Activated T-helper 2 cell treated with anti-CD3 and anti-CD28 coated beads, Interferon-gamma antibody, Interleukin-2, Interleukin-4, amounts not matched to agents 10 μg/mL and 5 μg/mL and 100 μg/mL, durations not matched to agents 14 hours and 24 hours and 36 hours (primary cell): ENCODE measurements at regions of chr14 and their contacts with region 1.

Region 1: GRCh38 chr14:77301103-77301502 is 19.6 kb downstream of the POMT2 start:
- DNase-seq: peak; percentile 43
- H3K4me3 Mint-ChIP-seq: no peak overlapping the region
- H3K27ac Mint-ChIP-seq: no peak overlapping the region
- H3K4me1 Mint-ChIP-seq: peaks cover 25% of the 10 kb centered on the region
- H3K27me3 Mint-ChIP-seq: peaks cover 1% of the 10 kb centered on the region

Region 2: GRCh38 chr14:76962303-76962660 is 338.8 kb before region 1 on chr14:
- intact Hi-C with region 1: loop called (anchors 5 kb)
- DNase-seq: no peak
- H3K4me3 Mint-ChIP-seq: peak overlapping the region; percentile 50
- H3K27ac Mint-ChIP-seq: peak overlapping the region; percentile 95
- H3K4me1 Mint-ChIP-seq: peaks cover 80% of the 10 kb centered on the region
- H3K27me3 Mint-ChIP-seq: no peaks in the 10 kb centered on the region

Region 3: DNA sequence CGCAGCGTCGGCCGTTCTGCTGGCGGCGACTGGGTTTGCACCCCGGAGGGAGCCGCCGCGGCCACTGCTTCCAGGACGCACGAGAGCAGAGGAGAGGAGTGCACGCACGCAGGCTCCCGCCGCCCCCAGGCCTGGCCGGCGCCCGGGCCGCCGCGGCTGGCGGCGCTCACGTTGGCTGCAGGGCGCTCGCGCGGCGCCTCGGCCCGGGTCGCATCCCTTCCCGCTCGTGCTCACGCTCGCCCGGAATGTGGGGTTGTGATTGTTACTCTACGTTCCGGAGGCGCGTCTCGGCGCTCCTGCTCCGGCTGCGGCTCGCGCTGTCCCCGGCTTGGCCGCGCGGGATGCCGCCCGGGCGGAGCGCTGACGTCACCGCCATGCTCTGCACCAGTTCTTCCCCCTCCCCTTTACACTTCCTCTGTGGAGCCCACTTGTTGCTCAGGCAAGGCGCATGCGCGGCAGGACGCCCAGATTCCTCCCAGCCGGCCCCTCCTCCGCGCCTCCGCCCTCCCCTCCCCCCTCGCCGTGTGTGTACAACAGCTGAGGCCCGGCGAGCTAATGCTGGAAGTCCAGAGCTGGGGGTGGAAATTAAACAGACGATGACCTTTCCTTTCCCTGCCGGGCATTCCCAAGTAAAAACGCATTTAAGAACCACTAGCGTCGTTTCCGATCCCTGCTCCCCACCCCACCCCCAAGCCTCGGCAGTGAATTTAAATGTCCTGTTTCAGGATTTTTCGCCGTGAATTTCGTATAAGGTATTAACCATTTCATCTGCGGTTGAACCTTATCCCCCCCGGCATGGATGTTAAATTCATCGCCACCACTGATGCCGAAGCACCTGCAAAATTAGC is 272.5 kb before region 1 on chr14 and contains the start of gene IRF2BPL:
- intact Hi-C with region 1: loop called (anchors 5 kb)
- DNase-seq: peak; percentile 94
- H3K4me3 Mint-ChIP-seq: peak within 1 kb of the TSS; percentile 89
- H3K27ac Mint-ChIP-seq: peak within 1 kb of the TSS; percentile 94
- H3K4me1 Mint-ChIP-seq: peaks cover 49% of the 10 kb centered on the region
- H3K27me3 Mint-ChIP-seq: no peaks in the 10 kb centered on the region
- total RNA-seq, gene IRF2BPL: 34.8 and 35.8 TPM in 2 replicates

Region 4: GRCh38 chr14:77040059-77040740 is 260.9 kb before region 1 on chr14:
- intact Hi-C with region 1: loop called (anchors 5 kb)
- DNase-seq: peak; percentile 87
- H3K4me3 Mint-ChIP-seq: peak overlapping the region; percentile 76
- H3K27ac Mint-ChIP-seq: peak overlapping the region; percentile 89
- H3K4me1 Mint-ChIP-seq: peaks cover 81% of the 10 kb centered on the region
- H3K27me3 Mint-ChIP-seq: no peaks in the 10 kb centered on the region

Region 5: GRCh38 chr14:77376771-77377501 is 75.8 kb after region 1 on chr14 and contains the starts of genes SAMD15 and TMED8:
- intact Hi-C with region 1: loop called (anchors 5 kb)
- DNase-seq: peak; percentile 80
- H3K4me3 Mint-ChIP-seq: peak within 1 kb of the TSS; percentile 90
- H3K27ac Mint-ChIP-seq: peak within 1 kb of the TSS; percentile 89
- H3K4me1 Mint-ChIP-seq: peaks cover 37% of the 10 kb centered on the region
- H3K27me3 Mint-ChIP-seq: peaks cover 2% of the 10 kb centered on the region
- total RNA-seq, gene SAMD15: 0.41 and 0.57 TPM in 2 replicates
- total RNA-seq, gene TMED8: 28.0 and 29.0 TPM in 2 replicates

Region 6: DNA sequence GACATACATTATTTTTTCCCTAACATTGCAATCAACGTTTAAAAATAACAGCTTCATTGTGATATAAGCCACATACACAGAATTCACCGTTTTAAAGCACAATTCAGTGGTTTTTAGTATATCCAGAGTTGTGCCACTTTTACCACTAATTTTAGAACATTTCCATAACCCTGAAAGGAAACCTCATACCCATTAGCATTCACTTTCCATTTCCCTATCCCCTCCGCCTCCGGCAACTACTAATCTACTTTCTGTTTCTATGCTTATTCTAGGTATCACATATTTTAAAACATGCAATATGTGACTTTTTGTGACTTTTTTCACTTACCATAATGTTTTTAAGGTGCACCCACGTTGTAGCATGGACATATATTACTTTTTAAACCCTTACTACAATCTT is 253.1 kb after region 1 on chr14:
- intact Hi-C with region 1: loop called (anchors 10 kb)
- DNase-seq: no peak
- H3K4me3 Mint-ChIP-seq: peak overlapping the region; percentile 35
- H3K27ac Mint-ChIP-seq: peak overlapping the region; percentile 65
- H3K4me1 Mint-ChIP-seq: peaks cover 16% of the 10 kb centered on the region
- H3K27me3 Mint-ChIP-seq: no peaks in the 10 kb centered on the region

Region 7: GRCh38 chr14:77616454-77617229 is 315.5 kb after region 1 on chr14 and contains the start of gene SPTLC2:
- intact Hi-C with region 1: loop called (anchors 5 kb)
- DNase-seq: peak; percentile 96
- H3K4me3 Mint-ChIP-seq: peak within 1 kb of the TSS; percentile 93
- H3K27ac Mint-ChIP-seq: peak within 1 kb of the TSS; percentile 92
- H3K4me1 Mint-ChIP-seq: peaks cover 35% of the 10 kb centered on the region
- H3K27me3 Mint-ChIP-seq: no peaks in the 10 kb centered on the region
- total RNA-seq, gene SPTLC2: 26.6 and 29.6 TPM in 2 replicates